Activated CD4-positive, alpha-beta T cell treated with anti-CD3 and anti-CD28 coated beads, Interleukin-2, amount 10 ng/mL, durations not matched to agents 24 days and 14 days (primary cell): ENCODE measurements at regions of chr1 and their contacts with region 1.

Region 1: GRCh38 chr1:22131875-22132486 is 10.9 kb downstream of the WNT4 start:
- DNase-seq: peak; percentile 88
- H3K4me3 Mint-ChIP-seq: no peak overlapping the region
- H3K27ac Mint-ChIP-seq: no peak overlapping the region
- H3K4me1 Mint-ChIP-seq: no peaks in the 10 kb centered on the region
- H3K27me3 Mint-ChIP-seq: peaks cover 2% of the 10 kb centered on the region

Region 2: GRCh38 chr1:21931171-21932093 is 200.5 kb before region 1 on chr1:
- intact Hi-C with region 1: no loop called
- DNase-seq: no peak
- H3K4me3 Mint-ChIP-seq: no peak overlapping the region
- H3K27ac Mint-ChIP-seq: no peak overlapping the region
- H3K4me1 Mint-ChIP-seq: peaks cover 8% of the 10 kb centered on the region
- H3K27me3 Mint-ChIP-seq: peaks cover 5% of the 10 kb centered on the region

Region 3: GRCh38 chr1:22275721-22276395 is 143.9 kb after region 1 on chr1:
- intact Hi-C with region 1: loop called (anchors 10 kb)
- DNase-seq: peak; percentile 79
- H3K4me3 Mint-ChIP-seq: no peak overlapping the region
- H3K27ac Mint-ChIP-seq: no peak overlapping the region
- H3K4me1 Mint-ChIP-seq: no peaks in the 10 kb centered on the region
- H3K27me3 Mint-ChIP-seq: peaks cover 2% of the 10 kb centered on the region

Region 4: GRCh38 chr1:22416555-22417454 is 284.8 kb after region 1 on chr1:
- intact Hi-C with region 1: loop called (anchors 1 kb)
- DNase-seq: peak; percentile 92
- H3K4me3 Mint-ChIP-seq: no peak overlapping the region
- H3K27ac Mint-ChIP-seq: no peak overlapping the region
- H3K4me1 Mint-ChIP-seq: peaks cover 4% of the 10 kb centered on the region
- H3K27me3 Mint-ChIP-seq: peaks cover 34% of the 10 kb centered on the region

Region 5: DNA sequence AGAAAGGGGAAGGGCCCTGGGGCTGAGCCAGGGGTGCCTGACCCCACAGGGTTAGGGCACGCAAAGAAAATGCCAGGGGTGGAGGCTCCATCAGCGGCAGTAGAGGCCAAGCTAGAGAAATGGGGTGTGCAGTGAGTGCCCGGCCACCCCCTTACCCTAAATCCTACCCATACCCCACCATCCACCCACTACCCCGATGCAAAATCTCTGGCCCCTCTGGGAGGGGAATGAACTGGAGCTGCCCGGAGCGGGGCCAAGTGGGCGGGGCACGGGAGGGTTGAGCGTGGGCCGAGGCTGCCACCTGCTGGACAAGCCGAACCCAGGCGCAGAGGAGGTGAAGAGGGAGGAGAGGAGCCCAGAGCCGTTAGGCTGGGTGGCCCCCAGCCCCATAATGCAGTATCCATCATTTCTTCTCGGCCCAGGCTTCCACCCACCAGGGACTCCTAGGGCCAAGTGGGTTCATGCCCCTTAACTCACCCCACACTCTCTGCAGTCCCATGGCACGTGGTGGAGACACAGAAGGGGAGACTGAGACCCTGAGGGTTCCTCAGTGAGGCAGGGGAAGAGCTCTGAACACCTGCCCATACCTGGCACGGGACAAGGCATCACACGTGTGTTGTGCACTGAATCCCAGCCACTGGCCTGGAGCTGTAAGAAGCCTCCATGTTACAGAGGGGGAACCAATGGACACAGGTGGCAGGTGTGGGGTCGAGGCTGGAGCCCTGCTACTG is 510.1 kb after region 1 on chr1:
- intact Hi-C with region 1: loop called (anchors 5 kb)
- DNase-seq: peak; percentile 90
- H3K4me3 Mint-ChIP-seq: no peak overlapping the region
- H3K27ac Mint-ChIP-seq: no peak overlapping the region
- H3K4me1 Mint-ChIP-seq: no peaks in the 10 kb centered on the region
- H3K27me3 Mint-ChIP-seq: no peaks in the 10 kb centered on the region